ENCODE measurements at regions of chr18 and their contacts with region 1.

Region 1: GRCh38 chr18:27778441-27778840 is 398.5 kb downstream of the CDH2 start:
- DNase-seq: peak; percentile 8
- H3K4me3 Mint-ChIP-seq: no peak overlapping the region
- H3K27ac Mint-ChIP-seq: no peak overlapping the region
- H3K4me1 Mint-ChIP-seq: no peaks in the 10 kb centered on the region
- H3K27me3 Mint-ChIP-seq: no peaks in the 10 kb centered on the region
- CTCF ChIP-seq: peak; percentile 39

Region 2: DNA sequence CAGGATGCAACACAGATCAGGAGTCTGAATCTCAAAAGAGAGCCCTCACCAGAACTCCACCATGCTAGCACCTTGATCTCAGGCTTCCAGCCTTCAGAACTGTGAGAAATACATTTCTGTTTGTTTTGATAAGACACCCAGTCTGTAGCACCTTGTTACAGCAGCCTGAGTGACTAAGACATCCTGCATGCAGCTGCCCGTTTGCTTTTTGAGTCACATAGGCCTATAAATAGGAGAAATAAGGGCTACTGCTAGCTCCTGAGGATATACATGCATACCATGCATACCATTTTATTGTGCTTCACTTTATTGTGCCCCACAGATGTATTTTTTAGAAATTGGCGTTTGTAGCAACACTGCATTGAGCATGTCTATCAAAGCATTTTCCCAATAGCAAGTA is 60.7 kb after region 1 on chr18:
- CTCF ChIA-PET with region 1: interaction called, 10 read pairs
- POLR2A ChIA-PET with region 1: no interaction called
- intact Hi-C with region 1: no loop called
- DNase-seq: peak; percentile 90
- H3K4me3 Mint-ChIP-seq: no peak overlapping the region
- H3K27ac Mint-ChIP-seq: no peak overlapping the region
- H3K4me1 Mint-ChIP-seq: peaks cover 25% of the 10 kb centered on the region
- H3K27me3 Mint-ChIP-seq: no peaks in the 10 kb centered on the region
- CTCF ChIP-seq: no peak